ENCODE measurements at regions of chr16 and their contacts with region 1.

Region 1: GRCh38 chr16:5837007-5837670 is 739.5 kb upstream of the EEF2KMT start:
- DNase-seq: no peak
- ATAC-seq: no peak
- H3K4me3 ChIP-seq: no peak overlapping the region
- H3K27ac ChIP-seq: no peak overlapping the region
- H3K4me1 ChIP-seq: no peaks in the 10 kb centered on the region
- H3K27me3 ChIP-seq: no peaks in the 10 kb centered on the region
- CTCF ChIP-seq: no peak
- POLR2A ChIP-seq: no peak

Region 2: DNA sequence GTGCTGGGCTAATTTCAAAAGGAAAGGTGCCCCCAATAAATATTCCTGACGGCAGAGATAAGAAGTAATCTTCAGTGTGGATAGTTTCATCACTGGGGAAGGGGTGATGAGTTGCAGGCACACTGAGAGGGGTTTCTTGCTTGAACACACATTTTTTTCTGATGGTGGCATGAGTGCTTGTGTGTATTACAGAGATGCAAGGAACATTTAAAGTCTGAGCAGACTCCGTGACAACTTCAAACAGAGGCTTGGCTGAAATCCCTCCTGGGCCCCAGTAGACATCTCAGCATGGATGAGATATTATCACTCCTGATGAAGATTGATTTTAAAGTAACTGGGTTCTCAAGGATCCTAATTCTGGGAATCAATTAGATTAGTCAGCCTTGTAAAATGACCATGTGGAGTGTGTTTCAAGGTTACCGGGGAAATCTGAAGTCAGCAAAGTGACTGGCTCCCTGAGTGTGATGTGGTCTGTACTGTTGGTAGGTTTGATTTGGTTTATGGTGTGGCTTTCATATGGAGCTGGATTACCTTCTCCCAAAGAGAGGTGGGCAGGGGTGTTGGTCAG is 303.7 kb before region 1 on chr16:
- intact Hi-C with region 1: no loop called
- DNase-seq: no peak
- ATAC-seq: no peak
- H3K4me3 ChIP-seq: no peak overlapping the region
- H3K27ac ChIP-seq: no peak overlapping the region
- H3K4me1 ChIP-seq: no peaks in the 10 kb centered on the region
- H3K27me3 ChIP-seq: no peaks in the 10 kb centered on the region
- CTCF ChIP-seq: no peak
- POLR2A ChIP-seq: no peak

Region 3: DNA sequence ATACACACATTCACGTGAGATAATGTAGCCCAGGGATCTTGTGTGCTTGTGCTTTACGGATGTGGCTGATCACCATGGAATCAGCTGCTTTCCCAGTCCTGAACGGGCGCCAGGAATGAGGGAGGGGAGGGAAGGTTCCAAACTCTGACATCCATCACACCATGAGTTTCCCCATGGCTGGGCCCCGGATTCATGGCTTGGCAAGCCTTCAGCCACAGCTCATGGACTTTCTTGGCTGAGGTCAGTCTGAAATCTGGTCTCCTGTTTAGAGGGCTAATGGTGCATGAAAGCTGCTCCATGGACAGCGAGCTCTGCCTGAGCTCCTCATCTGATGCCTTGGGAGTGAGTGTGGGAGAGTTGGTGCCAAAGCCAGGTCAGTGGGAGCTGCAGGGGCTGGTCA is 28.1 kb after region 1 on chr16:
- intact Hi-C with region 1: no loop called
- DNase-seq: no peak
- ATAC-seq: no peak
- H3K4me3 ChIP-seq: no peak overlapping the region
- H3K27ac ChIP-seq: no peak overlapping the region
- H3K4me1 ChIP-seq: no peaks in the 10 kb centered on the region
- H3K27me3 ChIP-seq: no peaks in the 10 kb centered on the region
- CTCF ChIP-seq: no peak
- POLR2A ChIP-seq: no peak

Region 4: GRCh38 chr16:5895137-5895536 is 58.0 kb after region 1 on chr16:
- intact Hi-C with region 1: loop called in 1 of 10 experiments (anchors 10 kb)
- DNase-seq: no peak
- ATAC-seq: no peak
- H3K4me3 ChIP-seq: no peak overlapping the region
- H3K27ac ChIP-seq: no peak overlapping the region
- H3K4me1 ChIP-seq: no peaks in the 10 kb centered on the region
- H3K27me3 ChIP-seq: no peaks in the 10 kb centered on the region
- CTCF ChIP-seq: no peak
- POLR2A ChIP-seq: no peak

Measured in heart left ventricle (tissue), 16 donors.